Activated naive CD4-positive, alpha-beta T cell treated with anti-CD3 and anti-CD28 coated beads for 36 hours (primary cell): ENCODE measurements at regions of chr6 and their contacts with region 1.

Region 1: GRCh38 chr6:18264219-18264922 is at the start of gene DEK:
- DNase-seq: peak; percentile 91
- H3K4me3 Mint-ChIP-seq: peak within 1 kb of the TSS; percentile 96
- H3K27ac Mint-ChIP-seq: peak within 1 kb of the TSS; percentile 98
- H3K4me1 Mint-ChIP-seq: peaks cover 47% of the 10 kb centered on the region
- H3K27me3 Mint-ChIP-seq: no peaks in the 10 kb centered on the region
- total RNA-seq, gene DEK: 200 to 203 TPM

Region 2: DNA sequence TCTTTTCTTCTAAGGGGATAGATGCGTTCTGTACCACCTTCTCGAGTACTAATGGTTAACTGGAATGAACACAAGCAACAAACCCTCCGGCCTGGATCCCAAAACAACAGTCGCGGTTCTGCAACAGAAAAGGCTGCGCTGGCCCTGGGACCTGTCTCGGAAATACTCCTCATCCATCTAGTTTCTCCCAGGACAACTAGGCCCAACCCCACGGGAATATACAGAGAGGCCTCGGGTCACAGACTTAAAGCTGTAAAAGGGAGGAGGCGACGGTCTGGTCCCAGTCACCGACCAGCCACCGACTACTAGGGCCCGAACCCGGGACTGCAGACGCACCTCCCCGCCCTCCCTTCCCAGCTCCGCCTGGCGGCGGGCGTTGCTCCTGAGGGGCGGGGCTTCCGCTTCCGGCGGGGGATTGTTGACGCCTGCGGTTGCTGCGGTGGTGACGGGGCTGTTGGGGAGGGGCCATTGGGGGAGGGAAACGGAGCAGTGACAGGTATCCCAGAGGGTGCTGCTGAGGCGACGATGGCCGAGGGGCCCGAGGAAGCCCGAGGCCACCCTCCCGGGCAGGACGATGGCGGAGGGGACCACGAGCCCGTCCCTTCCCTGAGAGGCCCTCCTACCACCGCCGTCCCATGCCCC is 664.4 kb before region 1 on chr6 and contains the start of gene FAM8A1:
- CTCF ChIA-PET with region 1: no interaction called
- intact Hi-C with region 1: loop called (anchors 1 kb)
- DNase-seq: peak; percentile 98
- H3K4me3 Mint-ChIP-seq: peak within 1 kb of the TSS; percentile 75
- H3K27ac Mint-ChIP-seq: peak within 1 kb of the TSS; percentile 53
- H3K4me1 Mint-ChIP-seq: peaks cover 29% of the 10 kb centered on the region
- H3K27me3 Mint-ChIP-seq: no peaks in the 10 kb centered on the region
- total RNA-seq, gene FAM8A1: 2.9 to 3.0 TPM

Region 3: GRCh38 chr6:17884498-17885478 is 379.6 kb before region 1 on chr6:
- CTCF ChIA-PET with region 1: no interaction called
- intact Hi-C with region 1: loop called (anchors 1 kb)
- DNase-seq: peak; percentile 30
- H3K4me3 Mint-ChIP-seq: no peak overlapping the region
- H3K27ac Mint-ChIP-seq: no peak overlapping the region
- H3K4me1 Mint-ChIP-seq: peaks cover 21% of the 10 kb centered on the region
- H3K27me3 Mint-ChIP-seq: peaks cover 49% of the 10 kb centered on the region

Region 4: GRCh38 chr6:18242062-18242851 is 22.1 kb before region 1 on chr6:
- CTCF ChIA-PET with region 1: interaction called, 3 read pairs
- intact Hi-C with region 1: loop called (anchors 1 kb)
- DNase-seq: no peak
- H3K4me3 Mint-ChIP-seq: peak overlapping the region; percentile 42
- H3K27ac Mint-ChIP-seq: no peak overlapping the region
- H3K4me1 Mint-ChIP-seq: peaks cover 50% of the 10 kb centered on the region
- H3K27me3 Mint-ChIP-seq: no peaks in the 10 kb centered on the region

Region 5: DNA sequence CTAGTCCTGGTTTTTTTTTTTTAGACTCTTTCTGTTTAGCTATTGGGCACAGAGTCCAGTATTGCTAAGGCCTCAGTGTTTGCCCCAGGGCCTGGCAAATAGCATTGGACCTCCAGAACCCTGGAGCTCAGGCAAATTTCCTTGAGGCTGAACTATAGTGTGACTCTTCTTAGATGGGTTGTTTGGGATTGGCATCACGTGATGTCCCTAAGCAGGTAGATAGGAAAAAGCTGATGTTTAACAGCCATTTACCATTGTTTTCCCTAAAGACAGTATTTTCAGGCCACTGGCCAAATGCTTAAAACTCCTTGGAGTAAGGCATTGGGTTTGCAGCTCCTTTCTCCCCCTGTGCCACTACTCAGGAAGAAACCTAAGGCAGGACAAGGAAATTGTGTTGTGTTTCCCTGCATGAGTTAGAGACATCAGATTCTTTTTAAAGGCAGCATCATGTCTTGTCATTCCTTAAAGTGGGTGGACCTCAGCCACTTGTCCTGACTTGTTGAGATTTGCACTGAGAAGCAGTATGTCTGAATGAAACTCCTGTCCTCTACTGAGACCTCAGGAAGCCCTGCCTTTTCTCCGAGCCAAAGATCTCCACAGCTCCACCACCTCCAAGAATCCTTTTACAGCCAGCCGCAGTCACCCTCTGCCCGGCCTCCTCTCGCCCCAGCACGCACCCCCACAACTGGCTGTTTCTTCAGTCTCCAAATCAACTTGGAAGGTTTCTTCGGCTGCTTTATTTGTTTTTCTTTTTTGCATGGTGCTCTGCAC is 76.6 kb after region 1 on chr6:
- CTCF ChIA-PET with region 1: no interaction called
- intact Hi-C with region 1: no loop called
- DNase-seq: no peak
- H3K4me3 Mint-ChIP-seq: no peak overlapping the region
- H3K27ac Mint-ChIP-seq: no peak overlapping the region
- H3K4me1 Mint-ChIP-seq: peaks cover 2% of the 10 kb centered on the region
- H3K27me3 Mint-ChIP-seq: no peaks in the 10 kb centered on the region

Region 6: GRCh38 chr6:18387061-18387721 is 122.8 kb after region 1 on chr6 and contains the start of gene RNF144B:
- CTCF ChIA-PET with region 1: no interaction called
- intact Hi-C with region 1: loop called (anchors 1 kb)
- DNase-seq: peak; percentile 77
- H3K4me3 Mint-ChIP-seq: peak within 1 kb of the TSS; percentile 86
- H3K27ac Mint-ChIP-seq: peak within 1 kb of the TSS; percentile 32
- H3K4me1 Mint-ChIP-seq: peaks cover 25% of the 10 kb centered on the region
- H3K27me3 Mint-ChIP-seq: no peaks in the 10 kb centered on the region
- total RNA-seq, gene RNF144B: 1.5 to 3.2 TPM

Region 7: GRCh38 chr6:18488526-18489270 is 224.3 kb after region 1 on chr6:
- CTCF ChIA-PET with region 1: no interaction called
- intact Hi-C with region 1: loop called (anchors 1 kb)
- DNase-seq: no peak
- H3K4me3 Mint-ChIP-seq: no peak overlapping the region
- H3K27ac Mint-ChIP-seq: no peak overlapping the region
- H3K4me1 Mint-ChIP-seq: peaks cover 13% of the 10 kb centered on the region
- H3K27me3 Mint-ChIP-seq: peaks cover 14% of the 10 kb centered on the region